ENCODE measurements at regions of chr11 and their contacts with region 1.

Region 1: DNA sequence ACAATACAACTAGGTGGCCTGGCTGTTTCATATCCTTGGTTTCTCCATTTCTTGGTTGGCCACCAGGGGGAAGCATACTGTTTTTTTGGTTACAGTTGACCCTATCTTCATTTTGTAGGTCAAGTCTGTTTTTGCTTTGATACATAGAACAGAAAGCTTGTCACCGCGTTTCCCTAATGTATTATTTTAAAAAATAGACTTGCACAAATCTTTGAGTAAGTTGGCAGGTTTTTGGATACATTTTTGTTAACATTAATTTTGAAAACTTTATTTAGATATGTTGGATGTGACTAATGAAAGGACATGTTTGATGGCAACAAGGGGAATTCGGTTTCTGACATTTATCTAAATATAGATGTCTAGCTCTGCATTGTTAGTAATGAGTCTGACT is 3.0 kb downstream of the NCR3LG1 start:
- DNase-seq: no peak
- ATAC-seq: peak; percentile 56 to 77 (median 66)
- H3K4me3 ChIP-seq: no peak overlapping the region
- H3K27ac ChIP-seq: no peak overlapping the region
- H3K4me1 ChIP-seq: peaks cover 22% of the 10 kb centered on the region
- H3K27me3 ChIP-seq: peaks cover 0 to 38% (median 5%) of the 10 kb centered on the region in 3 donors
- CTCF ChIP-seq: peak; percentile 73

Region 2: GRCh38 chr11:17504330-17505107 is 149.9 kb after region 1 on chr11:
- intact Hi-C with region 1: loop called in 1 of 2 experiments (anchors 1 kb)
- DNase-seq: peak; percentile 82 to 94
- ATAC-seq: peak; percentile 88 to 97 (median 90)
- H3K4me3 ChIP-seq: no peak overlapping the region
- H3K27ac ChIP-seq: peak overlapping the region; percentile 18
- H3K4me1 ChIP-seq: no peaks in the 10 kb centered on the region
- H3K27me3 ChIP-seq: no peaks in the 10 kb centered on the region
- CTCF ChIP-seq: peak; percentile 96